Activated CD8-positive, alpha-beta memory T cell treated with anti-CD3 and anti-CD28 coated beads, Interleukin-2, amount 10 ng/mL, durations not matched to agents 7 days and 5 days (primary cell): ENCODE measurements at regions of chr7 and their contacts with region 1.

Region 1: DNA sequence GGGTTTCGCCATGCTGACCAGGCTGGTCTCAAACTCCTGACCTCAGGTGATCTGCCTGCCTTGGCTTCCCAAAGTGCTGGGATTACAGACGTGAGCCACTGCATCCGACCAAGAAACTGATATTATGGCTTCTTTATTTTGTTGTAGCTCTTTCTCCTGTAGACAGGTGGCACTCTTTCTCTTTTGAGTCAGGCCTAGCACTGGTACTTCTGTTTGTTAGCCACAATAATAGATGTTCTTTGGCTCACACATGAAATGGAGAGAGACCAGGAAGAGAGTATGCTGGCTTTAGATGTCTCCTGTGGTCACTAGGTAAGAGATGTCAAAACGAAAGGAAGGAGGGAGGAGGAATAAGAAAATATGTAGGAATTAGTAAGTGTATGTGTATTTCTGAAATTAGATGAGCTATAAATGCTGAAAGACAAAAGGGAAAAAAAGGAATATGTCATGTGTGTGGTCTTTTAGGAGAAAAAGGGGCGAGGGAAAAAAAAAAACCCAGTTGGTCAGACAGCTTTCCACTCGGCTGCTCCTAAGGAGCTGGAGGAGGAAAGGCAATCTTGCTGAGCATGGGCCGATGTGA is 78.7 kb downstream of the CLEC2L start:
- DNase-seq: no peak
- ATAC-seq: peak; percentile 66
- H3K4me3 Mint-ChIP-seq: no peak overlapping the region
- H3K27ac Mint-ChIP-seq: no peak overlapping the region
- H3K4me1 Mint-ChIP-seq: no peaks in the 10 kb centered on the region
- H3K27me3 Mint-ChIP-seq: no peaks in the 10 kb centered on the region

Region 2: DNA sequence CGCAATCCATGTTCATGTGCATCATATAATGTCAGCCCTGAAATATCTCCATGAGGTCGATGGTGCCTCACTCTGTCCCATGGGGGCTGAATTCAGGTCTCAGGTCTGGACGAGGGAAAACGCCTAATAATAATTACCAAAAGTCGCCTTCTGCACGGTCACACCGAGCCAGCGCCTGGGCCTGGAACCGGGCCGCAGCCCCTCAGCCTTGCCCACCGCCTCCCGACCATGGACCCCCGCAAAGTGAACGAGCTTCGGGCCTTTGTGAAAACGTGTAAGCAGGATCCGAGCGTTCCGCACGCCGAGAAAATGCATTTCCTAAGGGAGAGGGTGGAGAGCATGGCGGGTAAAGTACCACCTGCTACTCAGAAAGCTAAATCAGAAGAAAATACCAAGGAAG is 100.0 kb before region 1 on chr7:
- CTCF ChIA-PET with region 1: interaction called, 12 read pairs
- DNase-seq: no peak
- ATAC-seq: no peak
- H3K4me3 Mint-ChIP-seq: no peak overlapping the region
- H3K27ac Mint-ChIP-seq: no peak overlapping the region
- H3K4me1 Mint-ChIP-seq: peaks cover 6% of the 10 kb centered on the region
- H3K27me3 Mint-ChIP-seq: peaks cover 12% of the 10 kb centered on the region

Region 3: DNA sequence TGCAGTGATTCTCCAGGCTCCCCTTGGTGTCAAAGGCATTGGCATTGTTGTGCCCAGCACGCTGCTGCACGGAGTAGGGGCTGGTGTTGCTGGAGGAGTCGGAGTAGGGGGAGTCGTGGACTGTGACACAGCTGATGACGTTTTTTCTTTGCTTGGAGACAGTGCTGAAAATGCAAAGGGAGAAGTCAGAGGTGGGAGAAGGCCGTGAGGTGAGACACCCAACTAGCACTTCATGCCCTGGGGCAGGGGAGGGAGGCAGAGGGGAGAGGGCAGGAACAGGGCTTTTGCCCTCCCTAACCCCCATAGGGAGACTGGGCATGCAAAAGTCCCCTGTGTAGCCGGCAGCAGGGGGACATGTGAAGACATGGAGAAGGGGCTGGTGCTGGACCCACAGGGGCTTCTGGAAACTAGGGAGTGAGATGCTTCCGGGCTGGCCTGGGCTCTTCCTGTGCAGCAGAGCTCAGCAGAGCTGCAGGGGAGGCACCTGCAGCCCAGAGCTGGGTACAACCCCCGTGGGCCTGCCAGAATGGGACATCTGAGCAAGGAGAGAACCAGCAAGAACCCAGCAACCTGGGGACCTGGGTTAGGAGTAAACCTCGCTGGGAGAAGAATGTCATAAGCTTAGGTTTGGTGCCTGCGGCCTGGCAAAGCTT is 18.2 kb before region 1 on chr7:
- CTCF ChIA-PET with region 1: interaction called, 14 read pairs
- DNase-seq: peak; percentile 32
- ATAC-seq: no peak
- H3K4me3 Mint-ChIP-seq: no peak overlapping the region
- H3K27ac Mint-ChIP-seq: no peak overlapping the region
- H3K4me1 Mint-ChIP-seq: peaks cover 14% of the 10 kb centered on the region
- H3K27me3 Mint-ChIP-seq: no peaks in the 10 kb centered on the region

Region 4: DNA sequence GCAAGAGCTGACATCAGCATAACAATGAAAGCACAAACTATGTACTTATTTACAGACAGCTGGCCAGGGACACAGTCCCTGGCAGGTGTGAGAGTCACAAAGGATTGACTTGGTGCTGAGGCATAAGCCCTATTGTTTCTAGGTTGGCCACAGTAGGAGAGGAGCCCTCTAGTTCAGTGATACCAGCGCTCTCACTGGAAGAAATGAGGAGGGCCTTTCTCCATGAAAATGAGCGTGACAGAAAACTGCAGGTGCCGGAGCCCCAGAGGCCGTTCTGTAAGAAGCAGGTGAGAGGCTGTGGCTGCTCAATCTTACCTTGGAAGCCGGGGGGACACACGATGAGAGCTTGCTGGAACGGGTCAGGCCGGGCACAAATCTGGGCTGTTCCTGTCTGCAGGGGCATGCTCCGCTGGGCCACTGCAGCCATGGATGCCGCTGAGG is 11.8 kb after region 1 on chr7:
- CTCF ChIA-PET with region 1: interaction called, 17 read pairs
- DNase-seq: no peak
- ATAC-seq: no peak
- H3K4me3 Mint-ChIP-seq: no peak overlapping the region
- H3K27ac Mint-ChIP-seq: no peak overlapping the region
- H3K4me1 Mint-ChIP-seq: no peaks in the 10 kb centered on the region
- H3K27me3 Mint-ChIP-seq: no peaks in the 10 kb centered on the region

Region 5: GRCh38 chr7:139620676-139621344 is 18.6 kb after region 1 on chr7:
- CTCF ChIA-PET with region 1: interaction called, 24 read pairs
- DNase-seq: peak; percentile 69
- ATAC-seq: peak; percentile 78
- H3K4me3 Mint-ChIP-seq: no peak overlapping the region
- H3K27ac Mint-ChIP-seq: no peak overlapping the region
- H3K4me1 Mint-ChIP-seq: peaks cover 10% of the 10 kb centered on the region
- H3K27me3 Mint-ChIP-seq: no peaks in the 10 kb centered on the region

Region 6: GRCh38 chr7:139645572-139646523 is 43.6 kb after region 1 on chr7:
- CTCF ChIA-PET with region 1: interaction called, 18 read pairs
- DNase-seq: peak; percentile 87
- ATAC-seq: peak; percentile 72
- H3K4me3 Mint-ChIP-seq: no peak overlapping the region
- H3K27ac Mint-ChIP-seq: peak overlapping the region; percentile 25
- H3K4me1 Mint-ChIP-seq: peaks cover 44% of the 10 kb centered on the region
- H3K27me3 Mint-ChIP-seq: no peaks in the 10 kb centered on the region

Region 7: GRCh38 chr7:140003913-140004382 is 401.7 kb after region 1 on chr7:
- CTCF ChIA-PET with region 1: interaction called, 30 read pairs
- DNase-seq: peak; percentile 53
- ATAC-seq: no peak
- H3K4me3 Mint-ChIP-seq: no peak overlapping the region
- H3K27ac Mint-ChIP-seq: no peak overlapping the region
- H3K4me1 Mint-ChIP-seq: peaks cover 3% of the 10 kb centered on the region
- H3K27me3 Mint-ChIP-seq: no peaks in the 10 kb centered on the region